Activated CD8-positive, alpha-beta T cell treated with anti-CD3 and anti-CD28 coated beads for 36 hours (primary cell): ENCODE measurements at regions of chr1 and their contacts with region 1.

Region 1: DNA sequence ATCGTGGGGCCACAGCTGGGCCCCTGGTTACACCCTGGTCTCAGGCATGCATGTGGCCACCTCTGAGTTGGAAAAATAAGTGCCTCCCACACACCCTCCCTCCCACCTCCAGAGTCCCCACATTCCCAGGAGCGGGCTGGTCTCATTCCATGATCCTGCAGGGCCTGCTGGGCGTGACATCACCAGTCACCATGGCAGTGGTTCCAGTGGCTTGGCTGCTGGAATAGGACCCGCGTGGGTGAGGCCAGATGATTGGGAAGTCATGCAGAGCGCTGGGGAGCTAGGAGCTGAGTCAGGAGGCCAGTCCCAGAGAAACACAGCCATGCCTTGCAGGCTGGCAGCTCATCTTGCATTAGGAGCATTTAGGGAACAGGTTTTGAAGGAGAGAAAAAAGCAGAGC is 125.4 kb upstream of the TMEM51 start:
- DNase-seq: no peak
- ATAC-seq: no peak
- H3K4me3 Mint-ChIP-seq: no peak overlapping the region
- H3K27ac Mint-ChIP-seq: no peak overlapping the region
- H3K4me1 Mint-ChIP-seq: no peaks in the 10 kb centered on the region
- H3K27me3 Mint-ChIP-seq: no peaks in the 10 kb centered on the region
- CTCF ChIP-seq: no peak

Region 2: GRCh38 chr1:14778898-14779865 is 248.9 kb before region 1 on chr1:
- CTCF ChIA-PET with region 1: interaction called, 13 read pairs
- POLR2A ChIA-PET with region 1: no interaction called
- intact Hi-C with region 1: no loop called
- DNase-seq: peak; percentile 55
- ATAC-seq: no peak
- H3K4me3 Mint-ChIP-seq: no peak overlapping the region
- H3K27ac Mint-ChIP-seq: no peak overlapping the region
- H3K4me1 Mint-ChIP-seq: no peaks in the 10 kb centered on the region
- H3K27me3 Mint-ChIP-seq: peaks cover 1% of the 10 kb centered on the region
- CTCF ChIP-seq: peak; percentile 80

Region 3: GRCh38 chr1:14915356-14916054 is 112.6 kb before region 1 on chr1:
- CTCF ChIA-PET with region 1: interaction called, 6 read pairs
- POLR2A ChIA-PET with region 1: no interaction called
- intact Hi-C with region 1: loop called (anchors 10 kb)
- DNase-seq: peak; percentile 70
- ATAC-seq: peak; percentile 87
- H3K4me3 Mint-ChIP-seq: no peak overlapping the region
- H3K27ac Mint-ChIP-seq: no peak overlapping the region
- H3K4me1 Mint-ChIP-seq: no peaks in the 10 kb centered on the region
- H3K27me3 Mint-ChIP-seq: no peaks in the 10 kb centered on the region
- CTCF ChIP-seq: peak; percentile 82

Region 4: GRCh38 chr1:15014516-15014915 is 13.6 kb before region 1 on chr1:
- CTCF ChIA-PET with region 1: interaction called, 10 read pairs
- POLR2A ChIA-PET with region 1: interaction called, 3 read pairs
- intact Hi-C with region 1: no loop called
- DNase-seq: no peak
- ATAC-seq: no peak
- H3K4me3 Mint-ChIP-seq: no peak overlapping the region
- H3K27ac Mint-ChIP-seq: no peak overlapping the region
- H3K4me1 Mint-ChIP-seq: no peaks in the 10 kb centered on the region
- H3K27me3 Mint-ChIP-seq: no peaks in the 10 kb centered on the region
- CTCF ChIP-seq: no peak

Region 5: GRCh38 chr1:15038232-15039016 is 10.3 kb after region 1 on chr1:
- CTCF ChIA-PET with region 1: interaction called, 11 read pairs
- POLR2A ChIA-PET with region 1: no interaction called
- intact Hi-C with region 1: no loop called
- DNase-seq: peak; percentile 56
- ATAC-seq: peak; percentile 90
- H3K4me3 Mint-ChIP-seq: no peak overlapping the region
- H3K27ac Mint-ChIP-seq: no peak overlapping the region
- H3K4me1 Mint-ChIP-seq: peaks cover 6% of the 10 kb centered on the region
- H3K27me3 Mint-ChIP-seq: no peaks in the 10 kb centered on the region
- CTCF ChIP-seq: peak; percentile 28

Region 6: DNA sequence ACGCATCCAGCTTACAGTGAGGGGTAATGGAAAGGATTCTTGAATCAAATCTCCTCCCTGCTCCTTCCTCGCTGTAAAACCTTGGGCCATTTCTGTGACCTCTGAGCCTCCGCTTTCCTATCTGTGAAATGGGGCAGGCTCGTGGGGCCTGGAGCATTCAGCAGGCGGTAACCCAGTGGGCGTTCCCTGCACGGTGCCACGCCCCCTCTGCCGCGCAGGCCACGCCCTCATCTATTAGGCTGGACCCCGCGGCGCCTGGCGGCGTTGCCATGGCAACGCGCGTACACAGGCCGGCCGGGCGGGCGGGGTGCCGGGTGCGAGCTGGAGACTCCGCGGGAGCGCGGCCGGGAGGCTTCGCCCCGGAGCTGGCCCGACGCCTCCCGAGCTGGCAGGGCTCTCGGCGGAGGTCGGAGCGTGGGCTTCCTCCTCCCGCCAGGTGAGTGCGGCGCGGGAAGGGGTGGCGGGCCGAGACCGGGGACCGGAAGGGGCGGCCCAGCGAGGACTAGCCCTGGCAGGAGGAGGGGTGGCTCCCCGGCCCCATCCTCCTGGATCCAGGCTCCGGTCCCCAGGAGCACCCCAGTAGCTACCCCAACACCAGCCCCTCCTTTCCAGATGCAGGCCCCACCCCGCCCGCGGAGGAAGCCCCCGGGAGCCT is 219.0 kb after region 1 on chr1 and contains the start of gene FHAD1:
- CTCF ChIA-PET with region 1: no interaction called
- POLR2A ChIA-PET with region 1: no interaction called
- intact Hi-C with region 1: no loop called
- DNase-seq: peak; percentile 71
- ATAC-seq: peak; percentile 18
- H3K4me3 Mint-ChIP-seq: peak within 1 kb of the TSS; percentile 43
- H3K27ac Mint-ChIP-seq: no peak within 1 kb of the TSS
- H3K4me1 Mint-ChIP-seq: peaks cover 57% of the 10 kb centered on the region
- H3K27me3 Mint-ChIP-seq: peaks cover 49% of the 10 kb centered on the region
- CTCF ChIP-seq: no peak
- total RNA-seq, gene FHAD1: 0.07 to 0.16 TPM